Keratinocyte (primary cell): ENCODE measurements at regions of chr2 and their contacts with region 1.

Region 1: DNA sequence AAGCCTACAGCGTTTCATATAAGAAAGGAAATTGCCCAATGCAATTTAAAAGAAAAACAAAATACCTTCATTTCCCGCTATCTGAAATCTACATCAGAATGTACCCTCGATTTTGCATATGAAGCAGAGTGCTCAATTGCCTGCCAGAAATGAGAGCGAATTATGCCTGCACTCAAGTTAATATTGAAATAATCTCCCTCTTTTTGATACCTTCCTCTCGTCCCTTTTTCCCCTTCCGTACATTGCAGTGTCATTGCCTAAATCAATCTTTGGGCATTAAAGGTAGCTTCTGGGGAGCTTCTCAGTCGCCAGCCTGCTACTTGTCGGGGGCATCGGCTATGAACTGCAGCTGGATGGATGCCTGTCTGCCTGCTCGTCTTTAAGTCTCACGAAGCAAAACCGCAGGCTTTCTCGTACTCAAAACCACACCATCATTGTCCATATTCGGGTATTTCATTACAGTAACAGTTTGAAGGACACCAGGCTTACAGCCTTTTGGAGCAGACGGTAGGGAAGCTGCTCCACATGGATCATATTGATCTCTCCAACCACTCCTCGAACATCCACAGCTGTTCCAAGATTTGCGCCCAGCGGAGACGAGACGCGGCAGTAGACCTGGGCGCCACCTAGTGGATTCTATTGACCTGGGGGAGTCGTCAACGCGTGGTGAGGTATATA is 64.0 kb upstream of the HNRNPA3 start:
- DNase-seq: no peak
- H3K4me3 ChIP-seq: peak overlapping the region in 2 of 3 experiments; percentile 53 to 73
- H3K27ac ChIP-seq: no peak overlapping the region
- H3K4me1 ChIP-seq: peaks cover 11% of the 10 kb centered on the region
- H3K27me3 ChIP-seq: peaks cover 16% of the 10 kb centered on the region
- CTCF ChIP-seq: peak; percentile 86 to 93 (median 92)

Region 2: DNA sequence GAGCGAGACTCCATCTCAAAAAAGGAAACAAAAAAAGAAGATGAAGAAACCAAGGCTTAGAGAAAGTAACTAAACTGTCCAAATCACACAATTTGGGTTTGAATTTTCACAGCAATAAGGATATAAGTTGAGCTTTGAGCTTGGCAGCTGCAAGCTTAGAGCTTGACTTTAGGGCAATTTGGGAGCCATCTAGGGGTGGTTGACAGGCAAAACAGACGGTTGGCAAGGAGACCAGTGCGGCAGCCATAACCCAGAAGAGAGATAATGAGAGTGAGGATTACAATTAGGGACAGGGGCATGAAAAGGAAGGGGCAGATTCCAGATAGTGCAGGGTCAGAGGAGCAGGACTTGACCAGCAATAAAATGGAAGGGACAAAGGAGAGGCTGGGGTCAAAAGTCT is 318.3 kb before region 1 on chr2:
- dilution Hi-C with region 1: loop called (anchors 25 kb)
- DNase-seq: no peak
- H3K4me3 ChIP-seq: no peak overlapping the region
- H3K27ac ChIP-seq: no peak overlapping the region
- H3K4me1 ChIP-seq: no peaks in the 10 kb centered on the region
- H3K27me3 ChIP-seq: no peaks in the 10 kb centered on the region
- CTCF ChIP-seq: no peak